ENCODE measurements at regions of chr7 and their contacts with region 1.

Region 1: GRCh38 chr7:27242555-27243339 is at the start of gene EVX1:
- DNase-seq: peak; percentile 33
- CTCF ChIP-seq: no peak

Region 2: GRCh38 chr7:27150568-27151340 is 92.0 kb before region 1 on chr7:
- in situ Hi-C with region 1: loop called (anchors 10 kb)
- DNase-seq: peak; percentile 93
- CTCF ChIP-seq: peak; percentile 93

Region 3: DNA sequence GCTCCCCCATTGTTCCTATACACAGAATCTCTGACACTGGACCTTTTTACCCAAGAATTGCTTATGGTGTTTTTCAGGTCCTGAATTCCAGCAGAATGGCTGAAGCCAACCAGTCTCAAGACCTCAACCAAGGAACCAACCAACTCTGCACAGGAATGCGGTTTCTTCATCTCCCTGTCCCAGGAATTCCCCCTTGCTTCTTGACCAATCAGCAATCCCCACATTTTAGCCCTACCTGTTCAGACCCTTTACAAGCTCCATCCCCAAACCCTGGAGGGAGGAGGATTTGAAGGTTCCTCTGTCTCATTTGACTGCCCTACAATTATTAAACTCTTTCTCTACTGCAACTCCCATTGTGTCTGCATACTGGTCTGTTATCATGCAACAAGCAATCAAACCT is 384.4 kb after region 1 on chr7:
- in situ Hi-C with region 1: no loop called
- DNase-seq: no peak
- CTCF ChIP-seq: no peak